ENCODE measurements at regions of chr4 and their contacts with region 1.

Region 1: GRCh38 chr4:52028969-52029368 is 8.8 kb upstream of the LRRC66 start:
- DNase-seq: no peak
- ATAC-seq: no peak
- H3K4me3 ChIP-seq: no peak overlapping the region
- H3K4me3 Mint-ChIP-seq: no peak overlapping the region
- H3K27ac ChIP-seq: no peak overlapping the region
- H3K27ac Mint-ChIP-seq: no peak overlapping the region
- H3K4me1 ChIP-seq: no peaks in the 10 kb centered on the region
- H3K4me1 Mint-ChIP-seq: no peaks in the 10 kb centered on the region
- H3K27me3 ChIP-seq: no peaks in the 10 kb centered on the region
- H3K27me3 Mint-ChIP-seq: no peaks in the 10 kb centered on the region
- CTCF ChIP-seq: no peak

Region 2: DNA sequence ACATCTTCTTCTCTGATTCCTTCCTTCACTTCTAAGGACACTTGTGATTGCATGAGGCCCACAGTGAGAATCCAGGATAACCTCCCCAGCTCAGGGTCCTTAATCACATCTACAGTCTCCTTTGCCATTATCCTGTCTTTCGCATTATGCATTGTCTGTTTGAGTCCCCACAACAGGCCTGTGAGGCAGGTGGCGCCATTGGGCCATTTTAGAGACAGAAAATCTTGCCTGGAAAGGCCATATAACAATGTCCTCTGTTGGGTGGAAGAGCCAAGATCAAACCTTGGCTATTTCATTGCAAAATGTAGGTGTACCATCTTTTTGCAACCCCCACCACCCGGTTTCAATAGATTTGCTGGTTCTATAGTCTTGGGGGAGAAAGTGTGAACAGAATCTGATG is 197.8 kb before region 1 on chr4:
- CTCF ChIA-PET with region 1: interaction called, 46 read pairs
- POLR2A ChIA-PET with region 1: no interaction called
- intact Hi-C with region 1: loop called (anchors 1 kb)
- DNase-seq: peak; percentile 41 to 79 (median 68)
- ATAC-seq: peak; percentile 63
- H3K4me3 ChIP-seq: no peak overlapping the region
- H3K4me3 Mint-ChIP-seq: no peak overlapping the region
- H3K27ac ChIP-seq: no peak overlapping the region
- H3K27ac Mint-ChIP-seq: no peak overlapping the region
- H3K4me1 ChIP-seq: no peaks in the 10 kb centered on the region
- H3K4me1 Mint-ChIP-seq: no peaks in the 10 kb centered on the region
- H3K27me3 ChIP-seq: no peaks in the 10 kb centered on the region
- H3K27me3 Mint-ChIP-seq: peaks cover 11% of the 10 kb centered on the region
- CTCF ChIP-seq: peak; percentile 64

Region 3: GRCh38 chr4:51895813-51896408 is 133.1 kb before region 1 on chr4:
- CTCF ChIA-PET with region 1: interaction called, 4 read pairs
- POLR2A ChIA-PET with region 1: no interaction called
- intact Hi-C with region 1: loop called (anchors 2 to 5 kb)
- DNase-seq: peak; percentile 1 to 70 (median 42)
- ATAC-seq: peak; percentile 80
- H3K4me3 ChIP-seq: no peak overlapping the region
- H3K4me3 Mint-ChIP-seq: no peak overlapping the region
- H3K27ac ChIP-seq: no peak overlapping the region
- H3K27ac Mint-ChIP-seq: no peak overlapping the region
- H3K4me1 ChIP-seq: no peaks in the 10 kb centered on the region
- H3K4me1 Mint-ChIP-seq: peaks cover 5% of the 10 kb centered on the region
- H3K27me3 ChIP-seq: no peaks in the 10 kb centered on the region
- H3K27me3 Mint-ChIP-seq: no peaks in the 10 kb centered on the region
- CTCF ChIP-seq: peak; percentile 67